Activated T-helper 1 cell treated with anti-CD3 and anti-CD28 coated beads, Interleukin-12 subunit alpha, Interleukin-12 subunit beta, Interleukin-2, Interleukin-4 antibody, amounts not matched to agents 30 ng/mL and 10 ng/mL and 1 ng/mL, durations not matched to agents 14 hours and 24 hours and 36 hours (primary cell): ENCODE measurements at regions of chr3 and their contacts with region 1.

Region 1: DNA sequence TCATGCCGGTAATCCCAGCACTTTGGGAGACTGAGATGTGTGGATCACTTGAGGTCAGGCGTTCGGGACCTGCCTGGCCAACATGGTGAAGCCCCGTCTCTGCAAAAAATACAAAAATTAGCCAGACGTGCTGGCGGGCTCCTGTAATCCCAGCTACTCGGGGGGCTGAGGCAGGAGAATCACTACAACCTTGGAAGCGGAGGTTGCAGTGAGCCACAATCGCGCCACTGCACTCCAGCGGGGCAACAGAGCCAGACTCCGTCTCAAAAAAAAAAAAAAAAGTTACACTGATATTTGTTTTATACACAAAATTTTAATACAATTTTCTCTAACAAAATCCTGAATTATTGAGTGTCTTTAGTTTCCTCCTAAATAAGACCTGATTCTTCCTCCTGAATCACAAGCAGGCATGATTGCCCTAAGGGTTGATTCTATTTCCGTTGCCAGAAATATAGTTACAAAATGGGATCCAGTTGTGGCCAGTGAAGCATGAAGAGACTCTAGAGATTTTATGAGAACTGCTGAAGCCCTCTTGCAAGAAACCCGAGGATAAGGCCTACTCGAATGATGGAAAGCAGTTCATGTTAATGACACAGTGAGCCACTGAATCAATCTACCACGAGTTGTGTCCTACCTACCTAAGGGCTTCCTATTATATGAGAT is 9.6 kb upstream of the SMARCC1 start:
- DNase-seq: no peak
- H3K4me3 Mint-ChIP-seq: no peak overlapping the region
- H3K27ac Mint-ChIP-seq: no peak overlapping the region
- H3K4me1 Mint-ChIP-seq: no peaks in the 10 kb centered on the region
- H3K27me3 Mint-ChIP-seq: no peaks in the 10 kb centered on the region

Region 2: DNA sequence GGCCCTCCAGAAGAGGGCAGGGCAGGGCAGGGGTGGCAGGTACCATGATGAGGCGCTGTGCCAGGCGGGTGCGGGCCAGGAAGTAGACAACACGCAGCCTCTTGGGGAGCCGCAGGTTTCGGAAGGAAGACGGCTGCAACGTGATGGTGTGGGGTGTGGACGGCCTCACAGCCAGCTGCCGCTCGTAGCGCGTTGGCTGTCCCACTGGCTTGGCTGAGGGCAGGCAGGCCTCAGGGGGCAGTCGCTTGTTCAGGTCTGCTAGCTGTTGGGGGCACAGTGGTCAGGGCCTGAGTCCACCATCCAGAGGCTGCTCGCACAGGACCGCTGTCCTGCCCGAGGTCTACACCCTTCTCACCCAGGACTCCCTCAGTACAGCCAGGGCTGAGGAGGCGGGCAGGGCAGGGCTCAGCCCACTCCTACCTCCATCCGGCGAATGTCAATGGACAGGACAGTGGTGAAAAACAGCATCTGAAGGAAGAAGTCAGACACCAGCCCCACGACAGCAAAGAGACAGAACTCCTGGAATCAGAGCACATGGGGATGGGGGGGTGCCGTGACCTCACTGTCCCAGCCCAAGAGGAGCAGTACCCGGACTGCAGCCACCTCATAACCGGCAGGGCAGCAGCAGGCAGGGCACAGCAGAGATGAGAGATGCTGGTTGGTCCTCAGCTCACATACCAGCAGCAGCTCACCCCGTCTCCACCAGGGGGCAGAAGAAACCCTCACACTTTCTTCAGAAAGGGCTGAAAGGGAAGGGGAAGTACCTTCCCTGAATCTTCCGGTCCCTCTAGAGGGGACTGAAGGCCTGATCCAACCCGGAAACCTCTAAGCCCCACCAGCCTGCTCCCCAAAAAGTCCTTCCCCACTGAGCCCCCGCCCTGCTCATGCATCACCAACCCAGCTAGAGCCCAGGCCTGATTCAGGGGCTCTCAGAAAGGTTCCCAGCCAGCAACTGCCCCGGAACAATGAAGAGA is 370.5 kb before region 1 on chr3:
- intact Hi-C with region 1: loop called (anchors 1 kb)
- DNase-seq: peak; percentile 83
- H3K4me3 Mint-ChIP-seq: peak overlapping the region; percentile 43
- H3K27ac Mint-ChIP-seq: peak overlapping the region; percentile 98
- H3K4me1 Mint-ChIP-seq: peaks cover 22% of the 10 kb centered on the region
- H3K27me3 Mint-ChIP-seq: no peaks in the 10 kb centered on the region

Region 3: GRCh38 chr3:47802734-47803477 is 11.6 kb after region 1 on chr3 and contains the start of gene DHX30:
- intact Hi-C with region 1: loop called (anchors 1 kb)
- DNase-seq: peak; percentile 82
- H3K4me3 Mint-ChIP-seq: peak within 1 kb of the TSS; percentile 93
- H3K27ac Mint-ChIP-seq: peak within 1 kb of the TSS; percentile 95
- H3K4me1 Mint-ChIP-seq: peaks cover 19% of the 10 kb centered on the region
- H3K27me3 Mint-ChIP-seq: no peaks in the 10 kb centered on the region
- total RNA-seq, gene DHX30: 149 and 154 TPM in 2 replicates